Tibial artery (tissue), 4 donors: ENCODE measurements at regions of chr3 and their contacts with region 1.

Region 1: DNA sequence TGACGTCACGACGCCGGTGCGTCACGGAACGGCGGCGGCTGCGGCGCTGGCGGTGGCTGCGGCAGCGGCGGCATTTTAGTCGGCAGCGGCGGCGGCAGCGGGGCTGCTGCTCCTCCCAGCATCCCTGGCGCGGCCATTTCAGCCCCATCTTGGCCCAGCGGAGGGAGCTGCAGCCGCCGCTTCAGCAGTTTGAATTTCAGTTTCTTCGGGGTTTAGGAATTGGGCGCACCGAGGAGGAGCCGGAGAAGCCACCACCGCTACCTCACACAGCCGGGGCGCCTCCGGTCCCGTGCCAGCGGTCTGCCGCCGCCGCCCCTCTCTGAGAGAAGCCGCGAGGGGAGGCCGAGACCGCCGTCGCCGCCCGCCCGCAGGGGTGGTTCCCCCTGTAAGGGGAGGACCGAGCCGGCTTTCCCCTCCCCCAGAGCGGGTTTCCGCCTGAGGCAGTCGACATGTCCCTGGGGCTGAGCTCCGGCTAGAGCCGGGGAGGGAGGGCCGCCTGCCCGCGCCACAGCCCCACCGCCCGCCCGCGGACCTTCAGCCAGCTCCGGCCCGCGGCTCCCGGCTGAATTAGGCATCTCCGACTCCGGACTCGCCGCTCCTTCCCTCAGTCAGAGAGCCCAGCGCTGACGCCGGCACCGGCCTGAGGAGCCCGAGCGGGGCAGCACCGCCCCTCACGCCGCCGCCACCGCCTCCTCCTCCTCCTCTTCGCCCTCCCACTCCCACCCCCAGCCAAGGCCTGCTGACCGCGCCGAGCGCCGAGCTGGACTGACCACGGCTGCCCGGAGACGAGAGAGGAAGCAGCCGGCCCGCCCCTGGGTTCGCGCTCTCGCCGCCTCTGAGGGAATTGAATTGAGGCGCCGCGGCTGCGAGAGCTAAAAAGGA is at the start of gene TSC22D2:
- DNase-seq: peak; percentile 93 to 98
- H3K4me3 ChIP-seq: peak within 1 kb of the TSS; percentile 90 to 93
- H3K27ac ChIP-seq: peak within 1 kb of the TSS; percentile 100
- H3K4me1 ChIP-seq: peaks cover 0 to 12% (median 0%) of the 10 kb centered on the region in 4 donors
- H3K27me3 ChIP-seq: no peaks in the 10 kb centered on the region
- CTCF ChIP-seq: peak; percentile 12 to 17

Region 2: GRCh38 chr3:150227839-150228238 is 180.6 kb before region 1 on chr3:
- intact Hi-C with region 1: loop called (anchors 5 kb)
- DNase-seq: peak in 1 of 2 donors; percentile 46
- H3K4me3 ChIP-seq: no peak overlapping the region
- H3K27ac ChIP-seq: no peak overlapping the region
- H3K4me1 ChIP-seq: peaks cover 0 to 1% (median under 1%) of the 10 kb centered on the region in 4 donors
- H3K27me3 ChIP-seq: no peaks in the 10 kb centered on the region
- CTCF ChIP-seq: peak; percentile 56 to 62

Region 3: DNA sequence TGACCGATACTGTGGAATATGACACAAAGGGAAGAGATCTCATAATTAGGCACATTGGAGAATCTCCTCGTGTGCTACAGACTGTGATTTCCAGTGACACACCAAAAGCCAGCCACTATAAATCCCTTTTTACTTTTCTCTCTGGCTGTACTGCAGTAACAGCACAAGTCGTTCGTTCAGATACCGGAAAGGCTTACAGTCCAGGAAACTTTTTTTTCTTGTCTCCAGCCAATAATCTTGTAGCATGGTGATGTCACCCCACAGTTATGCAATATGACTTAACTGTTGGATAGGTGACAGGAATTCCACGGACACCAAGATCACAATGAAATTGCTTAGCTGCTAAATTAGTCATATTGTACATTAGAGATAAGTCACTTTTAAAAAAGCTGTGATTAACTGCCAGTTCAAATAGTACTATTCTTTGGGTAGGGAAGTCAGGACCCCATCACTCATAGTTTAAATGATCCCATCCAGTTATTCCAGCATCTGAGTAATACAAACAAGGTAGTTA is 36.7 kb before region 1 on chr3:
- intact Hi-C with region 1: loop called (anchors 5 kb)
- DNase-seq: peak in 1 of 2 donors; percentile 49
- H3K4me3 ChIP-seq: peak overlapping the region; percentile 25 to 27
- H3K27ac ChIP-seq: peak overlapping the region; percentile 52 to 75
- H3K4me1 ChIP-seq: peaks cover 0 to 35% (median 14%) of the 10 kb centered on the region in 4 donors
- H3K27me3 ChIP-seq: no peaks in the 10 kb centered on the region
- CTCF ChIP-seq: no peak

Region 4: GRCh38 chr3:150495563-150496168 is 87.2 kb after region 1 on chr3:
- intact Hi-C with region 1: loop called (anchors 2 kb)
- DNase-seq: no peak
- H3K4me3 ChIP-seq: no peak overlapping the region
- H3K27ac ChIP-seq: no peak overlapping the region
- H3K4me1 ChIP-seq: no peaks in the 10 kb centered on the region
- H3K27me3 ChIP-seq: no peaks in the 10 kb centered on the region
- CTCF ChIP-seq: peak; percentile 75 to 80

Region 5: DNA sequence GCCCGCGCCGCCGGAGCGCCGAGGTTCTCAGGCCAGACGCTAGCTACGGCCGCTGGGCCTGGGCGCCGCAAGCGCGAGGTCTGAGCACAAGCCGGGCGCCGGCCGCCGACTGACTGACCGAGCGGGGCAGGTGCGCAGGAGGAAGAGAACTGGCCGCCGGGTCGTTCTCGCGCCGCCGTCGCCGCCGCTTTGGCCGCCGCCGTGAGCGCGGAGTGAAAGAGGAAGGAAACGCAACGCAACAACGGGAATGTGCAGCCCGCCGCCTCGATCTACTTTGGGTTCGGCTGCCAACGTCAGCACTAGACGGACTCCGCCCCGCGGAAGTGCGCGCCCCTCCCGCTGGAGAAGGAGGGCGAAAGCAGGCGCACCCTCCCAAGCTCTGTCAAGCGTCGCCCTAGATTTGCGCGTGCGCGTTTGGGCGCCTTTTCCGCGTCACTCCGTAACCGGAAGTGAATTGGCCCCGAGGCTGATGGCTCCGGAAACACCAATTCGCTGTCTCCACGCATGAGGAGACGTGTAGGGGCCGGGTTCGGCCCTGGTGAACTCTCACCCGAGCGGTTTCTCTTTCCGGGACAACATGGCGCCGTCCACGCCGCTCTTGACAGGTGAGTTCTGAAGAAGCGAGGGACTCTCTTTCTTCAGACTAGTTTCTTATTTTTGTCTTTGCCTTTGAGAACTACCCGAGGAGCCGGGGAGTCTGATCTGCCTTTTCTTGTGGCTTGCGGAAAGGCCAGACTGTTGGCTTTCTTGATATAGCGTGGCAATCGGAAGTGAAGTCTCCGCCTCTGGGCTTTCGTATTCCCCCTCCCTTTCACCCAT is 138.0 kb after region 1 on chr3 and contains the starts of genes EIF2A and SERP1:
- intact Hi-C with region 1: loop called (anchors 2 kb)
- DNase-seq: peak; percentile 97 to 99
- H3K4me3 ChIP-seq: peak within 1 kb of the TSS; percentile 84 to 91
- H3K27ac ChIP-seq: peak within 1 kb of the TSS; percentile 98
- H3K4me1 ChIP-seq: peaks cover 0 to 32% (median 25%) of the 10 kb centered on the region in 4 donors
- H3K27me3 ChIP-seq: no peaks in the 10 kb centered on the region
- CTCF ChIP-seq: no peak

Region 6: GRCh38 chr3:150639262-150639661 is 230.8 kb after region 1 on chr3:
- intact Hi-C with region 1: no loop called
- DNase-seq: no peak
- H3K4me3 ChIP-seq: no peak overlapping the region
- H3K27ac ChIP-seq: no peak overlapping the region
- H3K4me1 ChIP-seq: no peaks in the 10 kb centered on the region
- H3K27me3 ChIP-seq: no peaks in the 10 kb centered on the region
- CTCF ChIP-seq: no peak

Region 7: DNA sequence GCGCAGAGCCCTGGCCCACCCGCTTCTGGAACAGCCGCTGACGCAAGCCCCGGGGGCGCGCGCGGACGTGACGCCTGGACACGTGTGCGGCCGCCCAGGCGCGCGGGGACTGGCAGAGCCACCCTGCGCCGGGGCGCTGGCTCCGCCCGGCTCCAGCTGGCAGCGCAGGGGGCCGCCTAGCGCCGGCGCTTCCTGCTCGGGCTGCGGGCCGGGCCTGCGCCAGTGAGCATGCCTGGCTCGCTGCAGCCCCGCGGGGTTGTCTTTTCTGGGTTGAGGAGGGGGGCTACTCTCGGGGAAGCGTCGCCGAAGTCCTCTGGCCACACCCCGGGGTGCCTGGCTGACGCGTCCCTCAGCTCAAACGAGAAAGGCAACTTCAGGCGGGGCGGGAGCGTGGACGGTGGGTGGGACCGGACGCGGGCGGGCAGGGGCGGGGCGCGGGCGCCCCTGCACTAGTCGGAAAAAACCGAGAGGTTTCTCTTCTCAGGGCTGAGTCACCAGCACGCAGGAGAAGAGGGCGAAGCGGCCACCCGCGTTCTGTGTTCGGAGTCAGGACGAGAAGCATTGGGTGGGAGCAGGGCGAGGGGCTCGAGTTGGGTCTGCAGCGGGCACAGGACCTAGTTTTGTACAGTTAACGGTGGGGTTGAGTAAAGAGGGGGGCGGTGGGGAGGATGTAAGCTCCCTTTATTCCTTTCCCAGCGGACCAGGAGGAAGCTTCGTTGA is 354.8 kb after region 1 on chr3 and contains the start of gene SIAH2:
- intact Hi-C with region 1: loop called (anchors 10 kb)
- DNase-seq: peak; percentile 92 to 96
- H3K4me3 ChIP-seq: peak within 1 kb of the TSS; percentile 77 to 90
- H3K27ac ChIP-seq: peak within 1 kb of the TSS; percentile 99
- H3K4me1 ChIP-seq: peaks cover 3 to 40% (median 24%) of the 10 kb centered on the region in 4 donors
- H3K27me3 ChIP-seq: no peaks in the 10 kb centered on the region
- CTCF ChIP-seq: no peak